ENCODE measurements at regions of chr16 and their contacts with region 1.

Region 1: DNA sequence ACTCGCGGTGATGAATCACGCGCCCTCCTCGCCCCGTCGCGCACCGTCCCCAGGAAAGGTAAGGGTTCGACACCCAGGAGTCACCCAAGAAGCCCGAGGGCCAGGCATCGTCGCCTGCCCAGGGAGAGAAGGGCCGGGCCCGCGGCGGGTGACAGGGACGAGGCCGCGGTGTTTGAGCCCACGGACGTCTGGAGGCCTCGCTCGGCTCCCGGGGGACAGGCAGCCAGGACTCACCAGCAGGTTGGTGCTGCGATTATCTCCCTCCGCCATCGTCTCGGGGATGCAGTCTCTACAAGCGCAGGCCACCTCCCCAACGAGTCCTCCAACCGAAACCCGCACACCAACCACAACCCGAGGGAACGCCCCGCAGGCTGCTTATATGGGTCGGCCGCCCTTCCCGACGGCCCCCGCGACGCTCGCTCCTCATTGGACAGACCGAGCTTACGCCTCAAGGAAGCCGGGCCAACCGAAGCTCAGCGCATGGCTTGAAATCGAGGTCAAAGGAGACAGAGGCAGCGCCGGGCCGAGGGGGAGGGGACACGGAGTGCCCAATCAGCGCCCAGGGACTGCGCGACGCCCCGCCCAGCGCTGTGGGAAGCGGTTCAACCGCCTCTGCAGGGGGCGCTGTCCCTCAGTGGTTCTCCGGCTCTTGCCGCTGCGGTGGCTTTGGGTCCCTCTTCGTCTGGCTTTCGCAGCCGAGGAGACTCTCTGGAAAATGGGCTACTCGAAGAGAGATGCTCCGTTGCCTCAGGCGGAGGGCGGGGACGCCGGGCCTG is at the start of gene ARL6IP1:
- DNase-seq: peak; percentile 100
- H3K4me3 Mint-ChIP-seq: peak within 1 kb of the TSS; percentile 92
- H3K27ac Mint-ChIP-seq: peak within 1 kb of the TSS; percentile 92
- H3K4me1 Mint-ChIP-seq: peaks cover 27% of the 10 kb centered on the region
- H3K27me3 Mint-ChIP-seq: no peaks in the 10 kb centered on the region
- CTCF ChIP-seq: peak; percentile 68
- total RNA-seq, gene ARL6IP1: 120 and 128 TPM in 2 replicates

Region 2: DNA sequence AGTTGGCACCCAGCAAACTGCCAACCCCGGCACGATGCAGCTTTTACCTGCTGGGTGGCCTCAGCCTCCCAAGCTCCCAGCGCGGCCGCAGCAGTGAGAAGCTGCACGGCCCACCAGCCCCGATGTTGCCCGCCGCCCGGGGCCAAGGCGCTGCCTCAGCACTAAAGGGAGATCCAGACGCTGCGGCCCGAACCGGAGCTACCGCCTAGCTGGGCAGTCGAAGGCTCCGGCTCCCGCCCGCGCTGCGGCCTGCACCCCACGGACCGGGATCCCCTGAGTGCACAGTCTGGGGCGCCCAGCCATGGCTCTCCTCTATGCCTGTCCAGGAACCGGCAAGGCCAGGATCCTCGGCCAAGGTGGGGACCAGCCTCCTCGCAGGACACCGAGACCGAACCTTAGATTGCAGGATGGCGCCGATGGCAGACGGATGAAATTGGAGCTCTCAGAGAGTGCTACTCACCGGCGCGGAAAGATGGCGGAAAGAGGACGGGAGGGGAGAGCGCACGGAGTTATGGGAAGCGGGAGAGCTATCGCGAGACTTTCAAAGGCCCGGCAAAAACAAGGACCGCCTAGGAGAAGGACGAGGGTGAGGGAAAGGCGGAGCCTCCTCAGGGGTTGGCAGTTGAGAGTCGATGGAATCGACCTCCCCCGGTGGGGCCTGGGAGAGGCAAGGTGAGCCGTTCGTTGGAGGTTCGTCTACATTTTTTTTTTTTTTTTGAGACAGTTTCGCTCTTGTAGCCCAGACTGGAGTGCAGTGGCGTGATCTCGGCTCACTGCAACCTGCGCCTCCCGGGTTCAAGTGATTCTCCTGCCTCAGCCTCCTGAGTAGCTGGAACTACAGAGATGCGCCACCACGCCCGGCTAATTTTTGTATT is 11.3 kb before region 1 on chr16 and contains the start of gene RPS15A:
- CTCF ChIA-PET with region 1: interaction called, 34 read pairs
- POLR2A ChIA-PET with region 1: interaction called, 238 read pairs
- intact Hi-C with region 1: no loop called
- DNase-seq: peak; percentile 98
- H3K4me3 Mint-ChIP-seq: peak within 1 kb of the TSS; percentile 95
- H3K27ac Mint-ChIP-seq: peak within 1 kb of the TSS; percentile 87
- H3K4me1 Mint-ChIP-seq: peaks cover 28% of the 10 kb centered on the region
- H3K27me3 Mint-ChIP-seq: no peaks in the 10 kb centered on the region
- CTCF ChIP-seq: no peak
- total RNA-seq, gene RPS15A: 869 and 1,431 TPM in 2 replicates

Region 3: DNA sequence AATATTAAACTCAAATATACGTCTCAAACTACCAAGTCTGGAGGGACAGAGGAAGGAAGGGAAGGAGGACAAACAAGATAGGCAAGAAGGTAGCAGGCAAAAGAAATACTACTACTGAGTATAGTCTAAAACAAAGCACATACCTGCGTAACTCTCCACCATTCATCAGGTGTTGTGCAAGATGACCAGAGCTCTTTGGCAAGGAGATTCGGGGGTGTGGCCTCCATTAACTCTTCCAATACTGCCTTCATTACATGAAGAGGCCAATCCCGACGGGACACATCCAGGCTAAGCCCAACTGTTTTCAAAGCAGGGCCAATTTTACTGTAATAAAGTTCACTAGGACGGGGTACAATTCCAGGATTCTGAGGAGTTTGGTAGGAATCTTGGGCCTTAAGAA is 38.2 kb after region 1 on chr16:
- CTCF ChIA-PET with region 1: interaction called, 18 read pairs
- POLR2A ChIA-PET with region 1: interaction called, 15 read pairs
- intact Hi-C with region 1: no loop called
- DNase-seq: peak; percentile 91
- H3K4me3 Mint-ChIP-seq: peak overlapping the region; percentile 31
- H3K27ac Mint-ChIP-seq: peak overlapping the region; percentile 88
- H3K4me1 Mint-ChIP-seq: peaks cover 14% of the 10 kb centered on the region
- H3K27me3 Mint-ChIP-seq: no peaks in the 10 kb centered on the region
- CTCF ChIP-seq: no peak

Region 4: GRCh38 chr16:18959031-18959505 is 157.7 kb after region 1 on chr16:
- CTCF ChIA-PET with region 1: interaction called, 6 read pairs
- POLR2A ChIA-PET with region 1: interaction called, 29 read pairs
- intact Hi-C with region 1: no loop called
- DNase-seq: no peak
- H3K4me3 Mint-ChIP-seq: no peak overlapping the region
- H3K27ac Mint-ChIP-seq: no peak overlapping the region
- H3K4me1 Mint-ChIP-seq: peaks cover 31% of the 10 kb centered on the region
- H3K27me3 Mint-ChIP-seq: no peaks in the 10 kb centered on the region
- CTCF ChIP-seq: no peak

Region 5: DNA sequence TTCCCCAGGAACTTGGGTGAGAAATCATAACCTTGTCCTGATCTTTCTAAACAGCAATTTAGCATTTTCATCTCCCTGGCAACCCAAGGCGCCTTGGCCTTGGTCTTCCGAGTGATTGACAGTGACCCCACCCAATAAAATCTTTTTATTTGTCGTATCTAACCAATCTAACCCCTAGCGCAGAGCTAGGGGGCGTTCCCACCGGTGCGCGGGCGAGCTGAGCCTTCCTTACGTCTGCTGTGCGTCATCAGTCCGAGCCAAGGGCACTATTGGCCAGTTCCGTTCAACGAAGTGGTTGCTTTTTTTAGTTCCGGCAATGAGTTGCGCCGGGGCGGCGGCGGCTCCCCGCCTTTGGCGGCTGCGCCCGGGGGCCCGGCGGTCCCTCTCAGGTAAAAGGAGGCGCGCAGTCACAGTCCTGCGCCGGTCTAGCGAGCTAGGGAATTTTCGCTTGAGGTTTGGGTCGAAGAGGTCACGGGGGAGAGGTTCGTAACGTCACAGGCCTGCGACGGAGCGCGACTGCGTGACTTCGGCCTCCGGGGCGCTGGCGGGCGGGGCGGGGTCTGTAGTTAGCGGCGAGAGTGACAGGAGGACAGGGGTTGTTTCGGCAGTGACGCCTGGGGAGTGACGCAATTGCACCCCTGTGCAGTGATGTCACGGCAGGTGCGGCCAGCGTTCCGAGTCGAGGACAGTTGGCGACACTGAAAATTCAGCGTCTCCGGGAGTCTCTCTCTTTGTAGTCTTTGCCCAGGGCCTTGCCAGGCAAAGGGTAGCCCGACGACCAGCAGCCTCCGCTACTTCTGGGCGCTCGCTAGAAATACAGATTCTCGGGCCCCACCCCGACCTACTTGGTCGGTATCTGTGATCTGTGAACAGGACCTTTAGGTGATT is 266.2 kb after region 1 on chr16 and contains the start of gene COQ7:
- CTCF ChIA-PET with region 1: interaction called, 3 read pairs
- POLR2A ChIA-PET with region 1: no interaction called
- intact Hi-C with region 1: loop called (anchors 5 kb)
- DNase-seq: peak; percentile 99
- H3K4me3 Mint-ChIP-seq: peak within 1 kb of the TSS; percentile 90
- H3K27ac Mint-ChIP-seq: peak within 1 kb of the TSS; percentile 99
- H3K4me1 Mint-ChIP-seq: peaks cover 12% of the 10 kb centered on the region
- H3K27me3 Mint-ChIP-seq: no peaks in the 10 kb centered on the region
- CTCF ChIP-seq: no peak
- total RNA-seq, gene COQ7: 19.0 and 21.4 TPM in 2 replicates

Measured in MCF 10A (cell line).